Tibial artery (tissue), 4 donors: ENCODE measurements at regions of chr2 and their contacts with region 1.

Region 1: DNA sequence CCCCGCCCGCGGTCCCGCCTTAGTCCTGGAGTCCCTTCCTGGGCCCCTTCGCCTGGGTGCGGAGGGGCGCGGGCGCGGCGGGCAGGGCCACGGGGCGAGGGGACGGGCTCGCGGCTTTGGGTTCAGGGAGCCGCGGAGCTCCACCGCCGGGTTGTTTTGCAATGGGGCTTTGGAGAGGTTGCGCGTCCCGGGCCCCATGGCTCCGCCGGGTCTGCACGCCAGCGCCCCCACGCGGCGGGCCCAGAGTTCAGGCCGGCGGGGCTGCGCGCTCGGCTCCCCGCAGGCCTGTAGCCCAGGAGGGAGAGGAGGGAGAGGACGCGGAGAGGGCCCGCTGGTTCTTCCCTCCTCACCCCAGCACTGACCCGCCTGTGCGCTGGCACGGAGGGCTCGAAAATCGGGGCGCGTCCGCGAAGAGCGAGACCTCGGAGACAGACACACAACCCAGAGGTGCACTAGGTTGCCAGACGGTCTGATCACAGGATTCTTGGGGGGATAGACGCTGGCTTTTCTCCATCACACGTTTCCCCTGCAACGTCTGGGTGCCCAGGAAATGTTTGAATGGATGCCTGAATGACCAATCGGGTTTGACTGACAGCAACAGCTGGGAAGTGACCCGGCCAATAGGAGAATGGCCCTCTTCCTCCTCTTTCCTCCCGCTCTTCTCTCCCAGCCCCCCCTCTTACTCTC is 4.9 kb upstream of the SIX2 start:
- DNase-seq: peak; percentile 69 to 81
- H3K4me3 ChIP-seq: peak overlapping the region; percentile 54 to 72
- H3K27ac ChIP-seq: peak overlapping the region; percentile 70 to 83
- H3K4me1 ChIP-seq: peaks cover 0 to 34% (median 31%) of the 10 kb centered on the region in 4 donors
- H3K27me3 ChIP-seq: no peaks in the 10 kb centered on the region
- CTCF ChIP-seq: peak; percentile 86 to 91

Region 2: GRCh38 chr2:44686561-44686960 is 327.6 kb before region 1 on chr2:
- intact Hi-C with region 1: no loop called
- DNase-seq: no peak
- H3K4me3 ChIP-seq: no peak overlapping the region
- H3K27ac ChIP-seq: no peak overlapping the region
- H3K4me1 ChIP-seq: no peaks in the 10 kb centered on the region
- H3K27me3 ChIP-seq: no peaks in the 10 kb centered on the region
- CTCF ChIP-seq: no peak

Region 3: GRCh38 chr2:44981136-44982108 is 32.7 kb before region 1 on chr2:
- intact Hi-C with region 1: loop called (anchors 5 kb)
- DNase-seq: peak; percentile 58 to 81
- H3K4me3 ChIP-seq: no peak overlapping the region
- H3K27ac ChIP-seq: no peak overlapping the region
- H3K4me1 ChIP-seq: no peaks in the 10 kb centered on the region
- H3K27me3 ChIP-seq: peaks cover 0 to 22% of the 10 kb centered on the region in 2 donors
- CTCF ChIP-seq: peak; percentile 78 to 87

Region 4: DNA sequence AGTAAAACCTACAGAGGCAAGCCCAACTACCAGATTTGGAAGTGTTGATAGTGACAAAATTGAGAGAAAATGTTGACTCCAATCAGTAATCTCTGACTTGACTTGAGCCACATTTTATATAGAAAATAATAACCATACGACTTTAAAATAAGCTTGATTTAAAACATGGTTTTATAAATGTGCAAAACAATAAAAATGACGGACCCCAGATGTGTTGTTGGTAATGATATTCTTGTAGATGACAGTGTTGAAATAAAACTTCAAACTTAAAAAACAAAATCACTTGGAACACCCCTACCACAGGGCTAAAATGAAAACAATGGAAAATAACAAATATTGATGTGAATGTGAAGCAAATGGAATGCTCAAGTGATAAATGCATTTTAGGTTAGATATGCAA is 408.8 kb after region 1 on chr2:
- intact Hi-C with region 1: loop called (anchors 10 kb)
- DNase-seq: no peak
- H3K4me3 ChIP-seq: no peak overlapping the region
- H3K27ac ChIP-seq: no peak overlapping the region
- H3K4me1 ChIP-seq: no peaks in the 10 kb centered on the region
- H3K27me3 ChIP-seq: no peaks in the 10 kb centered on the region
- CTCF ChIP-seq: no peak